Naive thymus-derived CD4-positive, alpha-beta T cell (primary cell): ENCODE measurements at regions of chr5 and their contacts with region 1.

Region 1: DNA sequence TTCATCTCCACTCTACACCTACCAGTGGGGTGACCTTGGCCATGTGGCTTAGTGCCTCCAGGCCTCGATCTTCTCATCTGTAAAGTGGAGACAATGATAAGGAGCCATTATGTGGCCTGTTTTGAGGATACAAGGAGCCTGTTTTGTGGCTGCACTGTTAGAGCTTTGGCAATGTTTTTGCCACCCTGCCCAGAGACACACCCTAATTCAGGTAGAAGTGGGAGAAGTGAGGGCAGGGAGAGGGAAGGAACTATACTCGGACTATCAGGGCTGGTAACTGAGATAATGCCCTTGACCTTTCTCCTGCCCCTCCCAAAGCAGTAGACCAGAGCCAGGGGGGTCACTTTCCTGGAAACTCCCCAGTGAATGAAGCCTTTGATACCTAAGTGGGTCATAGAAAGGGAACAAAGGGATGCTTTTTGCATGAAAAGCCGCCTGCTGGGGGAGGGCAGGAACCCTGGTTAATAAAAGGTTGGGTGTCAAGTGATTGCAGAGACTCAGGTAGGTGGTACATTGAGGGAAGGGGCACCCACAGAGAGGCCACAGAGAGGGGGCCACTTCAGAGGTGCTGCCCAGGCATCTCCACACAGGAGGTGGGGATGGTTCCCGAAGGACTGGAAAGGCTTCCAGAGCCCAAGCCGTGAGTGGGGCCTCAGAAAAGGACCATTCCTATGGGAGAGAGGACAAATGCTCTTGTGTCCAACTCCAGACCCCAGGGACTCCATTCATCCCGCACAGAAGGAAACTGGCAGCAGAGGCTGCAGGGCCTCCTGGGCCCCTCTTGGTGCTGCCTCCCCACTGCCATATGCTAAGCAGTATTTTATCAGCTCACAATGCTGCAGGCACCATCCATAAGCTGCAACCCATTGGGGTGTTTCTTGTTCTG is 42.3 kb upstream of the VDAC1 start:
- DNase-seq: no peak
- ATAC-seq: no peak
- H3K4me3 ChIP-seq: no peak overlapping the region
- H3K4me3 Mint-ChIP-seq: no peak overlapping the region
- H3K27ac ChIP-seq: no peak overlapping the region
- H3K27ac Mint-ChIP-seq: peak overlapping the region in 5 of 9 donors; percentile 8 to 75 (median 47)
- H3K4me1 ChIP-seq: peaks cover 0 to 55% of the 10 kb centered on the region in 2 donors
- H3K4me1 Mint-ChIP-seq: peaks cover 27 to 78% (median 57%) of the 10 kb centered on the region in 7 donors
- H3K27me3 ChIP-seq: no peaks in the 10 kb centered on the region
- H3K27me3 Mint-ChIP-seq: no peaks in the 10 kb centered on the region

Region 2: GRCh38 chr5:134063188-134063820 is 16.3 kb after region 1 on chr5:
- CTCF ChIA-PET with region 1: interaction called, 5 read pairs
- POLR2A ChIA-PET with region 1: interaction called, 15 read pairs
- intact Hi-C with region 1: loop called in 1 of 2 experiments (anchors 2 kb)
- DNase-seq: no peak
- ATAC-seq: no peak
- H3K4me3 ChIP-seq: no peak overlapping the region
- H3K4me3 Mint-ChIP-seq: no peak overlapping the region
- H3K27ac ChIP-seq: no peak overlapping the region
- H3K27ac Mint-ChIP-seq: peak overlapping the region in 6 of 9 donors; percentile 17 to 76 (median 66)
- H3K4me1 ChIP-seq: peaks cover 0 to 7% of the 10 kb centered on the region in 2 donors
- H3K4me1 Mint-ChIP-seq: peaks cover 6 to 47% (median 33%) of the 10 kb centered on the region in 7 donors
- H3K27me3 ChIP-seq: no peaks in the 10 kb centered on the region
- H3K27me3 Mint-ChIP-seq: peaks cover 0 to 10% (median 0%) of the 10 kb centered on the region in 5 donors